Aorta (tissue), 5 donors: ENCODE measurements at regions of chr5 and their contacts with region 1.

Region 1: GRCh38 chr5:177454397-177455035 is 7.9 kb downstream of the PRR7 start:
- DNase-seq: peak; percentile 92 to 99
- ATAC-seq: peak; percentile 83
- H3K4me3 ChIP-seq: peak overlapping the region in 1 of 2 donors; percentile 44
- H3K27ac ChIP-seq: no peak overlapping the region
- H3K4me1 ChIP-seq: no peaks in the 10 kb centered on the region
- H3K27me3 ChIP-seq: no peaks in the 10 kb centered on the region

Region 2: DNA sequence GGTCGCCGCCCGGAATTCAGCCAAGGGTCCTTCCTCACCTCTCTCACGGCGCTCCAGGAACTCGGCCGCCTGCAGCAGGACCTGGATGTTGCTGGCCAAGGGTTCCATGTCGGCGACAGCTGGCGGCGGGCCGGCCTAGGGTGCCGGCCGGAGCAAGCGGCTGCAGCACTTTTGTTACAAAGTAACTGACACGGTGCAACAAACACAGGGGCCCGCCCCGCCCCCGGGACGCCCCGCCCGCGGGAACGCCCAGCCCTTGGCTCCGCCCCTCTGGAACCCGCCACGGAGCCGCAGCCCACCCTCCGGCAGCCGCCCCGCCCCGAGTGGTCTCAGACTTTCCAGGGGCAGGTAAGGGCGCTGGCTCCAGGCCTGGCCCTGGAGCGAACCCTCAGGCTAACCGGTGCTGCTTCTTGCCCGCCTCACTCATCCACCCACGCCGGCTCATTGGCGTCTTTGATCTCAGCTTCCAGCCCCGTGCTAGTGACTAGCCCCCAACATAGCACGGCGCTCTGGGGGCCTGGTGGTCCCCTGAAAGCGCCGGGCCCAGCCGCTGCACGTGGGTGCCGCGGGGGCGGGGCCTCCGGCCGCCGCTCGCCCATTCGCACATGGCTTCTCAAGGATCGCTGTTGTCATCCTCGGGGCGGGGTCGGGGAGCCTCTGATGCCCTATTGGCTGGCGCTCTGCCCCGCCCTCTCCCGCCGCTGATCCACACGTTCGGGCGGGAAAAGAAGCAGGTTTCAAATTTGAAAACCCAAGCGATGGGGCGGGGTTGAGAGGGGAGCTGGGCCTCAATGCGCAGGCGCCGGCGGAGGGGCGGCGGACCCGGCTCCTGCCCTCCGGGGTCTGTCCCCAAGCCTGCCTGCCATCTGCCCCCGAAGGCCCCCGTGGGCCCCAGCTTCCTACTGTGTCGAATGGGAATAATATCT is 142.5 kb before region 1 on chr5 and contains the start of gene MXD3:
- intact Hi-C with region 1: loop called in 1 of 2 experiments (anchors 5 kb)
- DNase-seq: peak; percentile 98
- ATAC-seq: peak; percentile 93
- H3K4me3 ChIP-seq: peak within 1 kb of the TSS; percentile 29 to 36
- H3K27ac ChIP-seq: no peak within 1 kb of the TSS
- H3K4me1 ChIP-seq: no peaks in the 10 kb centered on the region
- H3K27me3 ChIP-seq: no peaks in the 10 kb centered on the region
- total RNA-seq, gene MXD3: 9.1 to 9.2 TPM

Region 3: DNA sequence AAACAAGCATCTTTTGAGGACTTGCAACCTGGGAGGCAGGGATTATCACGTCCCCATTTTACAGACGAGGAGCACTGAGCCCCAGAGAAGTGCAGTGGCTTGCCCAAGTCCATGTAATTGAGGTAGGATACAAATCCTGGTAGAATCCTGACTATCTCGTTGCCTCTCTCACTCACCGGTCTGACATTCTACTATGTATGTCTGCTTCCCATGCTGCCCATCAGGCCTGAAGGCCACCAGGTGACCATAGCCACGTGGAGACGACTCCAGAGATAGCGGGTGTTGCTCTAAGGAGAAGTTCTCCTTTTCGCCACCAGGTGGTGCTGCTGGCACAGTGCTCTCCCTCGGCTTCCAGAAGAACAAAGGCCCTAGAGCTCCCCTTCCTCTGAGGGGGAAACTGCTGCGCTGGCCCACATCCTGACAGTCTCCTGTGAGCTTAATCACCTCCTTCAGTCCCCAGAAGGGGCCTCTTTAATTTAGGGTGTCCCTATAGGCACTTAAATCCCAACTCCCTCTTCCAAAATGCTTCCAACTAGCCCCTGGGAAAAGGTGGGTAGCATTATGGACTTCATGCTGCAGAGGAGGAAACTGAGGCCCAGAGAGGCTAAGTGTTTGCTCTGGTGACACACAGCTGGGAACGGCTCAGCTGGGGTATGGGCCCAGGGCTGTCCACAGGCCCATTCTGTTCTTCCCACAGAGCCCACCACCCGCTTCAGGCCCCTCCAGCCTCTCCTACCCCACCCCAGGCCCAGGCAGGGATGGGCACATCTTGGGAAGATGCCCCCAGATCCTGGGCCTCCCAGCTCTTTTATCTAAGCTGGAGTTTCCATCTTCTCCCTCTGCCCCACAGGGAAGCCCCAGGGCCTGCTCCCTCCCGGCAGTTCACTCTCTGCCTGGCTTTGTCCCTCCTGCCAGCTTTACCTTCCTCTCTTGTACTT is 63.9 kb before region 1 on chr5:
- intact Hi-C with region 1: loop called (anchors 1 to 5 kb)
- DNase-seq: peak; percentile 85 to 89
- ATAC-seq: peak; percentile 92
- H3K4me3 ChIP-seq: no peak overlapping the region
- H3K27ac ChIP-seq: no peak overlapping the region
- H3K4me1 ChIP-seq: no peaks in the 10 kb centered on the region
- H3K27me3 ChIP-seq: no peaks in the 10 kb centered on the region

Region 4: DNA sequence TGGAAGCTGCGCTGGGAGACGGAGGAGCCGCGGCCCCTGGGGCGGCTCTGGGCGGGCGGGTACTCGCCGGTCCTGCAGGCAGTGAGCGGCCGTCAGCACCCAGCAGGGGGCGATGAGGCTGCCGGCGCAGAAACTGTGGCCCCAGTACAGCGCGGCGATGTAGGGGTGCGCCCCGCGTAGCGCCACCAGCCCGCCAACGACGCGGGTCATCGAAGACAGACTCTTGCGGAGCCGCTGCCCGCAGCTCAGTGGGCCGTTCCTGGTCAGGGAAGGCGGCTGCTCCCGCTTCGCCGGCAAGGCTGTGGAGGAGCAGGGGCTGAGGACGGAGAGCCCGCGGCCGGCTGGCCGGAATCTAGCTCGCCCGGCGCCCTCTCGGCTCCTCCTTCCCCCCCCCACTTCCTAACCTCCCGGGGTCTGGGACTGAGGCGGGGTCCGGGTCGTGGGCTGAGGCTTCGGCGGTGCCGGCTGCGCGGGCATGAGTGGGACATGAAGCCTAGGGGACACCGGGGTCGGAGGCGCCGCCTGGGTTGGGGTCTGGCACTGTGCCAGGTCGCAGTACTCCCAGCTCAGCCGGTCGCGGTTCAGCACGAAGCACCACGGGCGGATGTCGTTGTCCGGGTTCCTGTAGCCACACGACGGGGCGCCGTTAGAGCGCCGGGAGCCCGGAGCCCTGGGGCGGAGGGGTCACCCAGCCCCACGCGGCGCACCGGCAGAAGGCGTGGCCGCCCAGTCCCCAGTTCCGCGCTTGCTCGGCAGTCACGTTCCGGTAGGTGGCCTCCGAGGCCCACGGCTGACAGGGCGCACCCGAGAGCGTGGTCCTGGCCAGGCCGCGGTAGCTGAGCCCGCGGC is 50.5 kb before region 1 on chr5:
- intact Hi-C with region 1: loop called in 1 of 2 experiments (anchors 1 kb)
- DNase-seq: peak; percentile 90 to 96
- ATAC-seq: peak; percentile 95
- H3K4me3 ChIP-seq: peak overlapping the region in 1 of 2 donors; percentile 0
- H3K27ac ChIP-seq: no peak overlapping the region
- H3K4me1 ChIP-seq: no peaks in the 10 kb centered on the region
- H3K27me3 ChIP-seq: peaks cover 0 to 3% of the 10 kb centered on the region in 2 donors

Region 5: GRCh38 chr5:177425801-177426565 is 28.5 kb before region 1 on chr5:
- intact Hi-C with region 1: loop called in 1 of 2 experiments (anchors 2 kb)
- DNase-seq: peak; percentile 99 to 100
- ATAC-seq: peak; percentile 98
- H3K4me3 ChIP-seq: peak overlapping the region; percentile 36
- H3K27ac ChIP-seq: peak overlapping the region; percentile 79 to 94
- H3K4me1 ChIP-seq: peaks cover 0 to 3% of the 10 kb centered on the region in 2 donors
- H3K27me3 ChIP-seq: no peaks in the 10 kb centered on the region

Region 6: DNA sequence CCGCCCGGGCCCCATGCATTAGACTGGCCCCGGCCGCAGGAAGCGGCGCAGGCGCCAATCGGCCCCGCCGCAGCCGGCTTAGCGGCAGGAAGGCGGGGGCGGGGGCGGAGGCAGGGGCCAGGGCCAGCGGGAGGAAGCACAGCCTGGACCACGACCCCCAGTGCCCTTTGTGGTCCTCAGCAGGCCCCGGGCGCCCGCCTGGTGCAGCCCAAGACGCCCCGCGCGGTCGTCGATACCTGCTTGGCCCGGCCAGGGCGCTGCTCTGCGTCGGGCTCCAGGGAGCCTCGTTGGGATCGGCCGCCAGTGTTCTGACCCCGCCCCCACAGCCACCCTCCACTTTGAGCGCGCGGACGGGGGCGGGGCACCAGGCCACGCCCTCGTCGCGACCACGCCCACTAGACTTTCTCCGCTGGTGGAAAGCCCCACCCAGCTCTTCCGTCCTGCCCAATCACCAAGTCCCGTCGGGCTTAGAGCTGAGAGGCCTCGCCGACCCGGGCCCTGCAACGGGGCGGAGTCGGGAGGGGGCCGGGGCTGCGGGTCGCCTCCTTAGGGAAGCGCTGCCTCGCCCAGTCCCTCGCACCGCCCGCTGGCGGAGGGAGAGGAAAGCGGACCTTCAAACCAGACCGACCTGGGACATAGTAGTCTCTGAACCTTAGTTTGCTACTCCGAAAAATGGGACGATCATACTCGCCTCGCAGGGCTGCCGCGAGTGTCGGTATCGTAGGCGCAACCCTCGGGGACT is 42.9 kb after region 1 on chr5 and contains the start of gene PDLIM7:
- intact Hi-C with region 1: loop called in 1 of 2 experiments (anchors 2 kb)
- DNase-seq: peak; percentile 98
- ATAC-seq: peak; percentile 88
- H3K4me3 ChIP-seq: peak within 1 kb of the TSS; percentile 66 to 67
- H3K27ac ChIP-seq: peak within 1 kb of the TSS; percentile 95 to 99
- H3K4me1 ChIP-seq: no peaks in the 10 kb centered on the region
- H3K27me3 ChIP-seq: no peaks in the 10 kb centered on the region
- total RNA-seq, gene PDLIM7: 510 to 729 TPM